Posterior cingulate gyrus (tissue), 11 donors: ENCODE measurements at regions of chr9 and their contacts with region 1.

Region 1: DNA sequence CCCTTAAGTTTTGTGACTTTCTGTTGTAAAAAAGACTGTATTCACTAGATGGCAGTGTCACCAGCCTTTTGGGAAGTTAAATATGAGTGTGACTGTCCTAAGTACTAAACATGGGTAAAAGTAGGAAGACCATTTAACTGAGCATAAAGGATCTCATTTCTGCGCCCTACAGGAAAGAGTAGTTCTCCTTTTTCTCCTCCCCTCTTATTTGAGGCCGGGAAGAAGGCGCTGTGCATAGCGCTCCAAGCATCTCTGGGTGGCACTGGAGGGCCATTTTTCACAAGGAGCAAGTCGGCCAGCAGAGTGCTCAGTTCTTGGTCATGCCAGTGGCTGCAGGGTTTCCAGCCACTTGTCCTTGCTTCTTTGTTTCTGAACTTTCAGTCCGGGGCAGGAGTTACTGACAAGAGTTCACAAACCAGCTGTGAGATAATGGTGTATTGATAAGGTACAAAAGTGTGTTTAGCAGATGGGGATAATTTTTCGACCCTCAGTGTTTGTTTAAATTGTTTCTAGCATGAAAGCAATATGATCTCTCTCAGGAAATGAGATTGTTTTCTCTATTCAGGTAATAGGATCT is 227.6 kb upstream of the DMRT1 start:
- DNase-seq: peak; percentile 54 to 96 (median 78)

Region 2: DNA sequence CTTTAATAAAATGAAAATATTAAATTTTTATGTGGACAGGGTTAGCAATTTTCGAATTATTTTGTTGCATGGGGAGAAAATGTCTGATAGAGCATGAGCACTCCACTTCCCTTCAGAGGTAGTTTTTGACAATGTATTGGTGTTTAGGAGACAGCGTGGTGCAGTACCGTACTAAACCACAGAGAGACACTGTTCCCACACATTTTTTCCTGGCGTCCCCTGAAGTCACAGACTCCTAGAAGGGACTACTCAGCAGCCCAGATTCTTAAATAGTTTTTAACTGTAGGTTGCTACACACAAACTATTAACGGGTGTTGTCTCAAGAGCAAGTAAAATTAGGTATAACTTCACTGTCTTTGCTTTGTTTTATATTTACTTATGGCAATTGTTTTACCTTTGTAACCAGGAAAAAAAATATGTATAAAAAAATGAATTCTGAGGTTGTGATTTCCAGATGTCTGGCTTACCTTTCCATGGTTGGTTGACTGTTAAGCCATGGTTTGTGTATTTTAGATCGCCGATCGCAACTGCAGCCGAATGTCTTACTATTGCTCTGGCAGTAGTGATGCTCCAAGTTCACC is 228.0 kb before region 1 on chr9:
- intact Hi-C with region 1: loop called (anchors 10 kb)
- DNase-seq: peak in 5 of 10 donors; percentile 44 to 84 (median 52)

Region 3: DNA sequence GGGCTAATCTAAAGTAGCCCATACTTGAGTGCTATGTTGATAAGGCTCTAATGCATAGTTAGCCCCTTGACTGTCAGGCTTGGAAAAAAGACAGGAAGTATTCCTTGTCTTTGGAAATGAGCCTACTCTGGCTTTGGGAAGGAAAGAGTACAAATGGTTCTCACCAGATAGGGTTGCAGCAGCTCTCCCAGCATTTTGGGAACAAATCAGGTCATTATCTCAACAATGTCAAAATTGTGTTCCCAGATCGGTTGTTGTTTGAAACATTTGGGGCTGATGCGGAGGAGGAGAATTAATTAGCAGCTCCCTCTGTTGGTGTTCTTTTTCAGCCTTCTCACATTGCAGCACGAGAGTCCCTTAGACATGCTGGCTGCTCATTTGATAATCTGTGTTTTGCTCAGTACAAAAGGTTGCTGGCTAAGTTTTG is 67.0 kb before region 1 on chr9:
- intact Hi-C with region 1: no loop called
- DNase-seq: peak in 2 of 10 donors; percentile 9 to 41

Region 4: DNA sequence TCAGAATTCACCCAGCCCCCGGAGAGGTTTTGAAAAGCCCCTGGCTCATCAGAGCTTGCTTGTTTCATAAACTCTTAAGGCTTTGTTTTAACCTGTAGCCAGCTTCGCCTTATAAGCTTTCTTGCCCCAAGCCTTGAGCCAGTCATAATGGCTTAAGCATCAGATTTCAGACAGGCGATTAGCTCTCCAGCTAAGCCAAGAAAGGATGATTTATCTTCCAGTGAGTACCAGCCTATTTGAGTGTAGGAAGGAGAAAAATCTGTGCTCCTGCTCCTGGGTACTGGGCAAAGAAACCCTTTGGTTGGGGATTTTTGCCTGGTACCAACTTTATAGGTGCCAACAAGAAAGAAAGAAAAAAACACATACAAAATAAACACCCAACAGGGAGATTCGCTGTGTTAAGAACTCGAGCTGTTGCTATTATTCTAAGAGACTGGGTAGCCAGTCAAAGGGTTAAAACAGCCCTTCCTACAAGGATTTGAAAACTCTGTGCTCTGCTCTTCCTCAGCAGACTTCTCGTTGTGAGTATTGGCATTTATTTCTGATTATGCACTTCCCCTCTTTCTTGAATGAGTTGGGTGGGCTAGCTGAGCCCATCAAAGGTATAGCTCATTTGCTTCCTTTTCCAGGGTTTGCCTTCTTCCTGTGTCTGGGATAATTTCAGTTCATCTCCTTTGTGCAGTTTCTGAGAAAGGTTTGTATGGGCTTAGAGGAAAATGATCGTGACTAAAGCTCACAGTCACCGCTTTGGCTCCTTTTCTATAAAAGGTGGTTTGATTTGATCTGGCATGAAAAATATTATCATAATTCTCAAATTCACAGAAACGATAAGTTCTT is 70.4 kb after region 1 on chr9:
- intact Hi-C with region 1: loop called (anchors 10 kb)
- DNase-seq: no peak

Region 5: DNA sequence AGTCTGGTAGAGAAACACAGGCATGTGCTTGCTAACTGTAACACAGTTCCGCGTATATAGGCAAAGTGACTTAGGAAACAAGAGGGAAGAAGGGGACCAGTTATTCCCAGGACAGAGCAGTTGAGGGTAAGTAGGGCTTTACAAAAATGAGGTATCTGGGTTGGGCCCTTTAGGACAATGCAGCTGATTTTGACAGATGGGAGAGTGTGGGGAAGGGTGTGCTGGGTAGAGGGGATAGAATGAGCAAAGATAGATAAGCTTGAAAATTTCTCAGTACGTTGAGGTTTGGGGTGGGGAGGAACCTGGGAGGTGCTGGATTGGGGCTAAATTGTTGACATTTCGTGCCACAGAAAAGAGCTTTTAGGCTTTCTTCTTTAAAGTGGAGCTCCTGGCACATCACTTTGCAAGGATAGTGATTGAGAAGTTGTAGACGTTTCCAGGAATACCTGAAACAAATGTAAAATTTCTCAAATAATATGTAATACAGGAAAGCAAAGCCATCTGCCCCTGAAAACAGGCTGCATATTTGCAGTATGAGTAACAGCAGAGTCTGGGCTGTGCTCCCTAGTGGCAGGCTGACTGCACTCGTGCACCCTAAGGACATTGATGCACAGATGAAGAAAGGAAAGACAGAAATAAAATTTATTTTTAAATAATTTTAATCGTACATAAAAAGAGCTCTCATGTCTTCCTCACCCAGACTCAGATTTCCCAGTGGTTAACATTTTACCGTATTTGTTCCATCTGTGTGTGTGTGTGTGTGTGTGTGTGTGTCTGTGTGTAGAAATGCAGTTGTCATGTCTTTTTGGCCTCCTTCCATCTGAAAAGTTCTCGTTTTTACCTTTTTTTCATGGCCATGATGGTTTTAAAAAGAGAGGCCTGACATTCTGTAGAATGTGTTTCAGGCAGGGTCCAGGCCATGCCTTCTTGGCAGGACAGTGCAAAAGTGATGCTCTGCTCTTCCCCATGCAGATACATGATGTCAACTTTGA is 82.8 kb after region 1 on chr9:
- intact Hi-C with region 1: no loop called
- DNase-seq: peak in 1 of 10 donors; percentile 85

Region 6: GRCh38 chr9:757246-757881 is 143.5 kb after region 1 on chr9:
- intact Hi-C with region 1: loop called (anchors 1 kb)
- DNase-seq: peak in 1 of 10 donors; percentile 38

Region 7: GRCh38 chr9:763692-764524 is 150.0 kb after region 1 on chr9:
- intact Hi-C with region 1: loop called (anchors 2 kb)
- DNase-seq: peak in 4 of 10 donors; percentile 23 to 91 (median 48)

Region 8: DNA sequence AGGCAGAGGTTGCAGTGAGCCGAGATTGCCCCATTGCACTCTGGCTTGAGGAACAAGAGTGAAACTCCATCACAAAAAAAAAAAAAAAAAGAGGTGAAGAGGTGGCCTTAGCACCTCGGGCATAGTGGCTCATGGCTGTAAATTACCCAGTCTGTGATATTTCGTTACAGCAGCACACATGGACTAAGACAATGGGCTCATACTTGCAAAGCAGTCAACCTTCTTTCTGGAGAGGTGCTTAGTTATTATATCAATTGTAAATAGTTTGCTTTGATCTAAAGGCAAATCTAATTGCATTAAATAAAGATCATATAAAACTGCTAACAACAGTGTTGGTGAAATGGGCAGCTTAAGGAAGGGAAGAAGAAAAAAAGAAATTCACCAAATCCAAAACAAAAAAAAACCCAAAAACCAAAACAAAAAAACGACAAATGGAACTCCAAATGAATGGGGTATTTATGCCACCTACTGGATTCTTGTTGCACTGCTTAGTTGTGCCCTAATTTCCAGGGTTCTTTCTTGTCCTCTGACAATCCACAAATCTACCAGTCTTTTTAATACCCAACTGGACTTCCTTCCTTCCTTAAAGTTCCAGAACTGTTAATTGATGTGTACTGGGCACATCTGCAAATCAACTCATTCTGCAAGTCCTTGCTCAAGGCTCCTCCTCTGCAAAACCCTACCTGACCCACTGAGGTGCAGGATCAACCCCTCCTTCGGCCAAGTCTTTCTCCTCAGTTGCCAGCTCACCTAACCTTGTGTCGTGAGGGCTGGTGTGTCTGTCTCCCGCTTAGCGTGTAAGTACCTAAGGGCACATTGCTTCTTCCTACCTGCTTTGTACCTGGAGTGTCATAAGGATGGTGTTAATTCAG is 192.7 kb after region 1 on chr9:
- intact Hi-C with region 1: loop called (anchors 1 kb)
- DNase-seq: no peak